A673 (cell line): ENCODE measurements at regions of chr1 and their contacts with region 1.

Region 1: DNA sequence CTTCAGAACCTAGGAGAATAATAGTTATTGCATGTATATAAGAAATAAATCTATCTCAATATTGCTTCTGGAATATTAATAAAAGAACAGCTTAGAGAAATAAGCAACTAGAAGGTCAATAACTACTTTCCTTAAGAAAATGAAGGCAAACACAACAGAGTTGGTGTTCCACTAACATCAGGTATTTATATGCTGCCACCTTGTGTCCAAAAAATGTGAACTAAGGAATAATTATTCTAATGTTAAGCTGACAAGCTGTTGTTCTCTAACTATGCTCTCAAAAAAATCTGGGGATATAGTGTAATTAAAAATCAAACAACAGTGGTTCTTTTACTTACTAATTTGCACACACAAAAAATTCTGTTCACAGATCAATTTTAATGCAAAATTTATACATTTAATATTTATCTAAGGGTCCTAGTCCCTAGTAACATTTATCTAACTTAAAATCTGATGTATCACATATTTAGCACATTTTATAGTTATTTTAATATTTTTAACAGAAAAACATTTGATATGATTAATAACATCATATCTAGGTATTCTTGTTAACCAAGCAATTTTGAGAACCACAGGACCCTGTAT is 39.6 kb downstream of the UCHL5 start:
- DNase-seq: peak; percentile 73
- H3K4me3 ChIP-seq: no peak overlapping the region
- H3K27ac ChIP-seq: no peak overlapping the region
- H3K4me1 ChIP-seq: no peaks in the 10 kb centered on the region
- H3K27me3 ChIP-seq: no peaks in the 10 kb centered on the region
- CTCF ChIP-seq: peak; percentile 66

Region 2: GRCh38 chr1:192609110-192610079 is 410.1 kb before region 1 on chr1:
- CTCF ChIA-PET with region 1: no interaction called
- POLR2A ChIA-PET with region 1: no interaction called
- intact Hi-C with region 1: loop called (anchors 5 kb)
- DNase-seq: no peak
- H3K4me3 ChIP-seq: no peak overlapping the region
- H3K27ac ChIP-seq: no peak overlapping the region
- H3K4me1 ChIP-seq: peaks cover 34% of the 10 kb centered on the region
- H3K27me3 ChIP-seq: no peaks in the 10 kb centered on the region
- CTCF ChIP-seq: no peak